ENCODE measurements at regions of chr7 and their contacts with region 1.

Region 1: DNA sequence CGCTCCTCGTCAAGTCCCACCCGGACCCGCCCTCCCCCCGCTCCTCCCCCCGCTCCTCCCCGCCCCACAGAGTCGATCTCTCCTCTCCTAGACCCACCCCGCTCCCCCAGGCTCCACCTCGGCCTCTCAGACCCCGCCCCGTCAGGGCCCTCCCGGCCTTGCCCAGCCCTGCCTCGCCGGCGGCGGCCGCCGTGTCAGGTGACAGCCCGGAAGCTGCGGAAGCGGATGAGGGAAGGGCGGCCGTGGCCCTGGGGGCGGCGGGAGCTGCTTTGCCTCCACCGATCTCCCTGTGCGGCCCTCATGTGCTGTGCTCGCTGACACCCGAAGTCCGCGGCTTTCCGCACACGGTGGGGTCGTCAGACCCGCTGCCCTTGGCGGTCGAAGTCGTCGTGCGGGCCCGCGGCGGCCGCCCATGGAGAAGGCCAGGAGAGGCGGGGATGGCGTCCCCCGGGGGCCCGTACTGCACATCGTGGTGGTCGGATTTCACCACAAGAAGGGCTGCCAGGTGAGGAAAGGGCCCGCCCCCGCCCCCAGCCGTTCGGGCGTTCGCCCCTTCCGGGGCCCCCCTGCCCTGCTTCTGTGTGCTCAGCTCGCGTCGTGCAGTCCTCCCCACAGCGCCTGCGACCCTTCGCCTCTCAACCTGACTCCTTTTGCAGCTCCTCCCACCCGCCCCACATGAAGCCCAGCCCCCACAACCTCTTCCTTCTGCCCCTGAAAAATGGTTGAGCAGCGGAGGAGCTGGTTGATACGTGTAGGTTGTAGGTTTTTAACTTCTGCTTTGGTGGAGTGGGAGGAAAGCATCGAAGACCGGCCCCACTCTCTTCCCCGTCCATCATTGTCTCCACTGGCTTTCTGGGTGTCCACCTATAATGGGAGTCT is at the start of gene AVL9:
- DNase-seq: peak; percentile 94
- ATAC-seq: peak; percentile 93
- H3K4me3 ChIP-seq: peak within 1 kb of the TSS; percentile 95
- H3K27ac ChIP-seq: peak within 1 kb of the TSS; percentile 86
- H3K4me1 ChIP-seq: peaks cover 13% of the 10 kb centered on the region; the same call in 1 of the 2 replicates
- H3K27me3 ChIP-seq: no peaks in the 10 kb centered on the region
- CTCF ChIP-seq: no peak
- total RNA-seq, gene AVL9: 11.3 and 13.2 TPM in 2 replicates

Region 2: GRCh38 chr7:32536585-32536984 is 41.0 kb after region 1 on chr7:
- CTCF ChIA-PET with region 1: no interaction called
- POLR2A ChIA-PET with region 1: interaction called, 14 read pairs
- intact Hi-C with region 1: loop called (anchors 2 kb)
- DNase-seq: peak; percentile 86
- ATAC-seq: peak; percentile 81
- H3K4me3 ChIP-seq: no peak overlapping the region
- H3K27ac ChIP-seq: no peak overlapping the region
- H3K4me1 ChIP-seq: peaks cover 16% of the 10 kb centered on the region
- H3K27me3 ChIP-seq: no peaks in the 10 kb centered on the region
- CTCF ChIP-seq: no peak

Region 3: DNA sequence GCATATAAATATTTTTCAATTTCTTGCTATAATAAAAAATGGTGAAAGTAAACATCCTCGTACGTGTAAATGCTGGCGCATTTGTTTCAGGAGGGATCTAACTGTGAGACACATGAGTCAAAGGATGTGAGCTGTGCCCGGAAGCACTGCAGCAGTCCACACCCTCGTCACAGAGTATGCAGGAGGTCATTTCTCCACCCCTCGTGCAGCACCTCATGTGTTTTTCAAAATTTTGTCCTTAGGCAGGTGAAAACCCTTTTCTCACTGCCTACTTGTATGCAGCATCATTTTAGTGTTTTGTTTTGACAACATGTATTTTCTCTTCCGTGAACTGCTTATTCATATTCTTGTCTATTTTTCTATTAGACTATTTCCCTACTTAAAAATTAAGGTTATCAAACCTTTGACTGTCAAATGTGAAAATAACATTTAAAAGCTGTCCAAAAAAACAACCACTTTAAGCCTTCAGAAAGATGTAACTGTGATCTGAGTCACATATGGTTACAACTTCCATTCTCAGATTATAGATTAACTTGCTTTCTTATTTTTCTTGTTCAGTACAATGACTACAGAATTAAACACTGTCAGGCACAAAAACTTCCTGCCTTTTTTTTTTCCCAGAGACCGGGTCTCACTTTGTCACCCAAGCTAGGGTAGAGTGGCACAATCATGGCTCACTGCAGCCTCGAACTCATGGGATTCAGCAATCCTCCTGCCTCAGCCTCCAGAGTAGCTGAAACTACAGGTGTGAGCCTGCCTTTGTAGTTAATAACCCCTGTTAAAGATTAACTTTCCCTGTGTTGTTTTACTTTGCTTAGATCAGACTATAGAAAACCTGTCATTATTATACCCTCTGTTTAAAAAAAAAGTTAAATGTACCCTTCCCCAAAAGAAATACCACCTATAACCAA is 162.8 kb after region 1 on chr7:
- CTCF ChIA-PET with region 1: no interaction called
- POLR2A ChIA-PET with region 1: no interaction called
- intact Hi-C with region 1: loop called (anchors 1 kb)
- DNase-seq: peak; percentile 90
- ATAC-seq: peak; percentile 99
- H3K4me3 ChIP-seq: peak overlapping the region; percentile 23; the same call in 1 of the 2 replicates
- H3K27ac ChIP-seq: peak overlapping the region; percentile 97
- H3K4me1 ChIP-seq: peaks cover 19% of the 10 kb centered on the region
- H3K27me3 ChIP-seq: no peaks in the 10 kb centered on the region
- CTCF ChIP-seq: no peak

Region 4: DNA sequence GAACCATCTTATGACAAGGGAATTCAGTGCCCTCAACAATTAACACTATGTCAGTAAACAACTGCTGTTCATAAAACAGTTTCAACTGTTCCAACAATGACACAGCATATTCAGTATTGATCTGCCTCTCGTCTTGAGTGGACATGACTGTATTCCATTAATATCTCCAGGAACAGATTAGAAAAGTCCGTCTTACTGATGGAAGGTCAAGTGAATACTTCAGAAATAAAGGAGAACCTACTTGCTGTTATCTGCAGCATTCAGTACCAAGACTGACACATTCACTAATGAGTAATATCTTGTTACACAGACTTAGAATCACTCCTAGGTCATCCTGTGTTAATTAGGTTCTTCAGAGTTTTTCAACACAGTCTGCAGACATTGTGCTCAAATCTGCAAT is 383.9 kb after region 1 on chr7:
- CTCF ChIA-PET with region 1: no interaction called
- POLR2A ChIA-PET with region 1: interaction called, 10 read pairs
- intact Hi-C with region 1: no loop called
- DNase-seq: no peak
- ATAC-seq: no peak
- H3K4me3 ChIP-seq: no peak overlapping the region
- H3K27ac ChIP-seq: no peak overlapping the region
- H3K4me1 ChIP-seq: no peaks in the 10 kb centered on the region
- H3K27me3 ChIP-seq: no peaks in the 10 kb centered on the region
- CTCF ChIP-seq: no peak

Region 5: DNA sequence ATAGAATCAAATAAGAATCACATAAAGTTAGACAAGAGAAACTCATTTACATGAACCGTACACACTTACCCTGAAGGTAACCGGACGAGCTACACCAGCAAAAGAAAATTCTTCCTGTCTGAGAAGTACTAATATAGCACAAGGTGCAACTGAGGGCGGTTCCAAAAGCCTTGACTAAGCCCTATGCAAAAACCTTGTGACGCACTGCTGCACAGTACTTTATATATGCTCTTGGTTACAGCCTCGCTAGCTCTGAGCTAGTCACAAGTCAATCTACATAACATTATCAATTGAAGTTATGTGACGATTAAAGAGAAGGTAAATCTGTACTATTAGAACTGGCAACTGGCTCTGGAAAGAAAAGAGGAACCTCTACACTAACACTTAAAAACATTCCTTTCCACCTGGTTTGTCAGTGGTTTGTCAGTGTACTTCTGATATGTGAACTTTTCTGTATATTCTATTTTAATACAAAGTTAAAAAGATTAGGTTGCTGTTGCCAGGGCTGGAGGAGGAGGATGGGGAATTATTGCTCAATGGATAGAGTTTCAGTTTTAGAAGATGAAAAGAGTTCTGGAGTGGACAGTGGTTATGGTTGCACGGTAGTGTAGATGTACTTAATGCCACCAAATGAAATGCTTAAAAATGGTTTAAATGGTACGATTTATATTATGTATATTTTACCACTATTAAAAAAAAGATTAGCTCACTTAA is 545.4 kb after region 1 on chr7:
- CTCF ChIA-PET with region 1: no interaction called
- POLR2A ChIA-PET with region 1: no interaction called
- intact Hi-C with region 1: loop called (anchors 10 kb)
- DNase-seq: peak; percentile 86
- ATAC-seq: peak; percentile 96
- H3K4me3 ChIP-seq: peak overlapping the region; percentile 53
- H3K27ac ChIP-seq: peak overlapping the region; percentile 40
- H3K4me1 ChIP-seq: peaks cover 67% of the 10 kb centered on the region
- H3K27me3 ChIP-seq: no peaks in the 10 kb centered on the region
- CTCF ChIP-seq: no peak

Measured in PC-3 (cell line).